ENCODE measurements at regions of chr10 and their contacts with region 1.

Region 1: GRCh38 chr10:76036111-76036940 is 604.9 kb downstream of the LRMDA start:
- DNase-seq: peak; percentile 18 to 88
- H3K4me3 ChIP-seq: peak overlapping the region; percentile 37 to 52
- H3K27ac ChIP-seq: peak overlapping the region; percentile 39 to 50
- H3K4me1 ChIP-seq: peaks cover 0 to 13% of the 10 kb centered on the region in 2 donors
- H3K27me3 ChIP-seq: no peaks in the 10 kb centered on the region
- CTCF ChIP-seq: peak; percentile 89 to 97 (median 93)

Region 2: DNA sequence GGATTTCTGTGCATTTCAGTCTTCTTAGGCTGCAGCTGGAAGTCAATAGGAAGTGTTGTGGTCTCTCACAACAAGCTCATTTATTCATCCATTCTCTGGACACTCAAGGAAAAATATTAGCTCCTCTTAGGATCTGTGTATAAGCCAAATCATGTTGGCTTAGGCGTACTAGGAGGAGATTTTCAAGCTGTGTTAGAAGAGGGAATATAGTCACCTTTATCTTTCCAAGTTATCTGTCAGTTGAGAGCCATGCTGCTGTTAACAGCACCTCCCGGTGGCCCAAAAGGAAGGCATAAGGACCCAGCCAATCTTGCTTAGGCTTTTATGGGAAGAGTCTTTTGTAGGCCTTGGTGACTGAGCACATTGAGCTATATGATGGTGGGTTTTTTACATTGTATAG is 384.9 kb before region 1 on chr10:
- intact Hi-C with region 1: loop called (anchors 10 kb)
- DNase-seq: no peak
- H3K4me3 ChIP-seq: no peak overlapping the region
- H3K27ac ChIP-seq: no peak overlapping the region
- H3K4me1 ChIP-seq: peaks cover 12 to 37% of the 10 kb centered on the region in 2 donors
- H3K27me3 ChIP-seq: no peaks in the 10 kb centered on the region
- CTCF ChIP-seq: peak in 1 of 3 experiments; percentile 7

Region 3: DNA sequence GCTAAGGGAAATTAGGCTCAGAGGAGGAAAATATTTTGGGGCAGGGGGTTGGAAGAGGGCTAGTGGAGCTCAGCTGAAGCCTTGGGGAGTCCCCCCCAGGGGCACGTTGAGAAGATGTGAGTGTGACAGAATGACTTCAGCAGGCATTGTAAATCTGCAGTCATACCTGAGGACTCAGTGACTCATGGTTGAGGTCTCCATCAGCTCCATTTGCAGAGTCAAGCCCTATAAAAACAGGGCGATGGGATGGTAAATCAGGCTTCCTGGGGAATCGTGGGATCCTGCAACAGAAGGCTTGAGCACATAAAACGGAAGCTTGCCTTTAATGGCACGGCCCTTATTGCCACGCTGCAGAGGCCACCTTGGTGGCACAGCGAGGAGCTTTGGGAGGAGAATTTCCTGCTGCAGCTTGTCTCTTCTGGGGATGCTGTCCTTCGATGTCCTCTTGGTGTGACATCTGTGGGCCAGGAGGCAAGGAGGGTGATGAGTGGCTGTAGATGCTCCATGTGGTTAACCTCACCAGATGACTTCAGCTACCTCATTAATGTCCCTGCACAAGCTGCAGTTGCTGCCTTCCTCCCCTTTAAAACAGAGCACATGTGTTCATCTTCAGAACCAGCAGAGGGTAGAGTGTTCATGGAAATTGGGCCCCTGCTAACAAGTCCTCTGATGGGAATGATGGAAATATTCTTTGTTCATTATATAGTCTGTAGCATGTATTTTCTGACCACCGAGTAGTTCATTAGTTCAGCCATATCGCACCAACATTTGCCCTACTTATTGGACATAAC is 319.0 kb before region 1 on chr10:
- intact Hi-C with region 1: loop called (anchors 10 kb)
- DNase-seq: no peak
- H3K4me3 ChIP-seq: no peak overlapping the region
- H3K27ac ChIP-seq: no peak overlapping the region
- H3K4me1 ChIP-seq: peaks cover 0 to 3% of the 10 kb centered on the region in 2 donors
- H3K27me3 ChIP-seq: no peaks in the 10 kb centered on the region
- CTCF ChIP-seq: no peak

Region 4: DNA sequence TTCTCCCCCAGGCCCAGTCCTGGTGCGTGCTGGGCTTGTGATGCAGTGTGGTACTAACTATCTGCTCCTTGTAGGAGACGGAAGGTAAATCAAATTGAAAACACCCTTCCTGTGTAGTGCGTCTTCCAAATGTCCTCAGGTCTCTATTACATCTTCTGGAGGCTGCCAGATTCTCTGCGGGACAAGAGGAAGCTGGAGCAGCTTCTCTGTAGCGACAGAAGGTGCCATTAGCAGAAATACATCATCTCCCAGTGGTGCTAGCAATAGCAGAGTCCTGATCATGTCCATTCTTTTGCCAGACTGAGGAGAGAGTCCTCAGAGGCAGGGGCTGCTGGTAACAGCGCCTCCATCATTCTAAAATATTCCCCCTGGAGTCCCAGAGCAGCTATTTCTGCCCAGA is 70.3 kb after region 1 on chr10:
- intact Hi-C with region 1: no loop called
- DNase-seq: no peak
- H3K4me3 ChIP-seq: no peak overlapping the region
- H3K27ac ChIP-seq: no peak overlapping the region
- H3K4me1 ChIP-seq: no peaks in the 10 kb centered on the region
- H3K27me3 ChIP-seq: no peaks in the 10 kb centered on the region
- CTCF ChIP-seq: no peak

Region 5: GRCh38 chr10:76303682-76304316 is 267.5 kb after region 1 on chr10:
- intact Hi-C with region 1: loop called (anchors 5 kb)
- DNase-seq: peak; percentile 22 to 85
- H3K4me3 ChIP-seq: peak overlapping the region in 1 of 2 donors; percentile 10
- H3K27ac ChIP-seq: no peak overlapping the region
- H3K4me1 ChIP-seq: peaks cover 0 to 4% of the 10 kb centered on the region in 2 donors
- H3K27me3 ChIP-seq: no peaks in the 10 kb centered on the region
- CTCF ChIP-seq: peak; percentile 38 to 66 (median 56)

Region 6: GRCh38 chr10:76547352-76547972 is 511.1 kb after region 1 on chr10:
- intact Hi-C with region 1: loop called (anchors 5 kb)
- DNase-seq: peak in 1 of 2 donors; percentile 91
- H3K4me3 ChIP-seq: peak overlapping the region in 1 of 2 donors; percentile 42
- H3K27ac ChIP-seq: no peak overlapping the region
- H3K4me1 ChIP-seq: peaks cover 0 to 3% of the 10 kb centered on the region in 2 donors
- H3K27me3 ChIP-seq: no peaks in the 10 kb centered on the region
- CTCF ChIP-seq: peak; percentile 81 to 92 (median 84)